Panc1 (cell line): ENCODE measurements at regions of chr5 and their contacts with region 1.

Region 1: DNA sequence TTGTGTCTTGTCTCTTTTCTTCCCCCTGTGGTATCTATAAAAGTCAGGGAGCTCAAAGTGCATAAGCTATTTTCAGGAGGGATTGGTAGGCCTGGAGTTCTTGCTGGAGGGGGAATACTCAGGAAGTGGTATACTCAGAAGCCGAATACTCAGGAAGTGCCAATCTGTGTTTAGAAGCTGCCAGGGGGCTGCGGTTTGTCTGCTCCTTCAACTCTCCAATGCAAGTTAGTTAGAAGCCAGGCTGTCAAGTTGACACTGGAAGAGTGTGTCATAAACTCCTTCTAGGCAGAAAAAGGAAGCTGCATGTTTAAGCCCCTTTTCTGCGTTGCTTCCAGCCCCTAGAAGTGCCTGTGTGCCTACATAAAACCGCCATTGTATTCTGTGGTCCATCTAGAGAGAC is 366.5 kb downstream of the TAF11L14 start:
- DNase-seq: no peak
- ATAC-seq: no peak
- H3K4me3 ChIP-seq: no peak overlapping the region
- H3K27ac ChIP-seq: no peak overlapping the region
- H3K4me1 ChIP-seq: no peaks in the 10 kb centered on the region
- H3K27me3 ChIP-seq: no peaks in the 10 kb centered on the region
- CTCF ChIP-seq: no peak

Region 2: DNA sequence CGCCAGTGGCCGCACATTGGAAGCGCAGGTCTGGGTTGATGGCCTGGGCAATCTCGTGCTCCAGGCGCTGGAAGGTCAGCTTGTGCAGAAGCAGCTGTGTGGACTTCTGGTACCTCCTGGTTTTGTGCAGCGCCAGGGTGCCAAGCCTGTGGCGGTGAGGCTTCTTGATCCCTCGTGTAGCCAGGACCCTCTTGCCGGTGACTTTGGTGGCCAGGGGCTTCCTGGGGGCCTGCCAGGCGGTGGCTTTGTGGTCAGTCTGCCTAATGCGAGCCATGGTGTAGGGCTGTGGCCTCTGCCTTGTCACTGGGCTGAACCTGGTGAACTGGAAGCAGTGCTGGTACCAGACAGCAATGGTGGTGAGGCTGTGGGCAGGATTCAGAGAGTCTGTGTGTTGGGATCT is 375.1 kb before region 1 on chr5:
- CTCF ChIA-PET with region 1: no interaction called
- POLR2A ChIA-PET with region 1: no interaction called
- in situ Hi-C with region 1: no loop called
- intact Hi-C with region 1: no loop called
- DNase-seq: no peak
- ATAC-seq: no peak
- H3K4me3 ChIP-seq: no peak overlapping the region
- H3K27ac ChIP-seq: no peak overlapping the region
- H3K4me1 ChIP-seq: no peaks in the 10 kb centered on the region
- H3K27me3 ChIP-seq: no peaks in the 10 kb centered on the region
- CTCF ChIP-seq: no peak

Region 3: GRCh38 chr5:18142831-18143230 is 142.1 kb after region 1 on chr5:
- CTCF ChIA-PET with region 1: no interaction called
- POLR2A ChIA-PET with region 1: no interaction called
- in situ Hi-C with region 1: no loop called
- intact Hi-C with region 1: no loop called
- DNase-seq: no peak
- ATAC-seq: no peak
- H3K4me3 ChIP-seq: no peak overlapping the region
- H3K27ac ChIP-seq: no peak overlapping the region
- H3K4me1 ChIP-seq: no peaks in the 10 kb centered on the region
- H3K27me3 ChIP-seq: no peaks in the 10 kb centered on the region
- CTCF ChIP-seq: no peak

Region 4: DNA sequence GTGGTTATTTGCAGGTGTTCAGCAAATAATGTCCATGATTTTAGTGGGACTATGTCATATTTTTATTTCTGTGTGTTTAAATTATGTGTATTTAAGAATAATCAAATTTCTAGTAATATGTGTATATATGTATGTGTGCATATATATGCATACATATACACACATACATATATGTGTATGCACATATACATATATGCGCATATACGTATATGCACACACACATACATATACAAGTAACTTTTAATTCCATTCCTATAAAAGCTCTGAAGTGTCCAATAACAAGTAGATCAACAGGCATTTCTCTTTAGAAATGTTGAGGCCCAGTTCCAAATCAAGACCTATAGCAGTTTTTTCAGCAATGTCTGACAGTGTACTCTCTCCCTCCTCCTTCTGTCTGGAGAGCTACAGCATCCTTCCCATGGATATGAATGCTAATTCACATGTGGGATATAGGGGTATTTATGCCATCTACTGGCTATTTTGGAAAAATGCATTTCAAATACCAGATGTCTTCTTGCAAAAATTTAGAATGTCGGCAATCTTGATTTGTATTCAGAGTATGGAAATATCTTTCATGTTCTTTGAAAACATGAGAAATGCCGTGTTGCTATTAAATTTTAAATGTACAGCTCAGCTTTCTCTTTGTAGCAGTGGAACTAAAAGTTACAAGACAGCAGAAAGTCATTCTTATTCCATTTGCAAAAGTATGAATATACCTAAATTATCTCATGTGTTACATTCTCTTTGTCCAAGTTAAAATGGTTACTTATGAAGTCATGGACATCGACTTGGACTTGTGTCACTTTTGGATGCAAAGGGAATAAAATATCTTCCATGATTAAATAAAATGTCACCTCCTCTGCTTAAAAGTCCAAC is 281.2 kb after region 1 on chr5:
- CTCF ChIA-PET with region 1: no interaction called
- POLR2A ChIA-PET with region 1: interaction called, 11 read pairs
- in situ Hi-C with region 1: no loop called
- intact Hi-C with region 1: no loop called
- DNase-seq: peak; percentile 58
- ATAC-seq: peak; percentile 87
- H3K4me3 ChIP-seq: no peak overlapping the region
- H3K27ac ChIP-seq: no peak overlapping the region
- H3K4me1 ChIP-seq: no peaks in the 10 kb centered on the region
- H3K27me3 ChIP-seq: 0 out of 2 replicates have a peak, but pooled peaks cover 2% of the 10 kb centered on the region
- CTCF ChIP-seq: peak; percentile 66; the same call in 1 of the 2 replicates